ENCODE measurements at regions of chr5 and their contacts with region 1.

Region 1: GRCh38 chr5:23139338-23140171 is 286.4 kb upstream of the CDH12 start:
- DNase-seq: peak; percentile 56
- ATAC-seq: 0 out of 2 replicates have a peak, but pooled peaks have one; percentile 35
- H3K4me3 ChIP-seq: no peak overlapping the region
- H3K27ac ChIP-seq: no peak overlapping the region
- H3K4me1 ChIP-seq: no peaks in the 10 kb centered on the region
- H3K27me3 ChIP-seq: no peaks in the 10 kb centered on the region
- CTCF ChIP-seq: peak; percentile 71

Region 2: DNA sequence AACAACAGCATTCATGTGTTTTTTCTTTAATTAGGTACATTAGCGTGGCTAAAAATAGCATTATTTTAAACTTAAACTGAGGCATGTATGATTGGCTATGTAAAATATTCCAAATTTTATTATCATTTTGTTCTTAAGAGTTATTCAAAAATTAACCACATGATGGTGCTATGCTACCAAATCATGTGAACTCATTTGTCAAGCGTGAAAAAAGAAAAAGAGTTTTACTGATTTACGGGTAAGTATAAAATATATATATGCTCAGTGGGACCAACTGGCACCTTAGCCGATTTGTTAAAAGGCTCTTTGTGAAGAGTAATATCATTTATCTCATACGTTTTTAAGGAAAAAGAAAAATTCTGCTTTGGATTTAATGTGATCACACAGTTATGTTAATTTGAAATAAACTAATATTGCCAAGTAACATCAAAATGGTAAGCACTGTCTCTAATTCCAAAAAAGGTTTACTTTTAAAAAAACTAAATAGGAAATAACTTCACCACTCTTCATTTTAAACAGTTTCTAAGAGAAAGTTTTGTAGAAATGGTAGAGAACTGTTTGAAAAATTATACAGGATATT is 1328.7 kb before region 1 on chr5:
- CTCF ChIA-PET with region 1: no interaction called
- POLR2A ChIA-PET with region 1: no interaction called
- intact Hi-C with region 1: loop called (anchors 10 kb)
- DNase-seq: peak; percentile 81
- ATAC-seq: no peak
- H3K4me3 ChIP-seq: no peak overlapping the region
- H3K27ac ChIP-seq: no peak overlapping the region
- H3K4me1 ChIP-seq: peaks cover 30% of the 10 kb centered on the region
- H3K27me3 ChIP-seq: no peaks in the 10 kb centered on the region
- CTCF ChIP-seq: peak; percentile 84

Region 3: DNA sequence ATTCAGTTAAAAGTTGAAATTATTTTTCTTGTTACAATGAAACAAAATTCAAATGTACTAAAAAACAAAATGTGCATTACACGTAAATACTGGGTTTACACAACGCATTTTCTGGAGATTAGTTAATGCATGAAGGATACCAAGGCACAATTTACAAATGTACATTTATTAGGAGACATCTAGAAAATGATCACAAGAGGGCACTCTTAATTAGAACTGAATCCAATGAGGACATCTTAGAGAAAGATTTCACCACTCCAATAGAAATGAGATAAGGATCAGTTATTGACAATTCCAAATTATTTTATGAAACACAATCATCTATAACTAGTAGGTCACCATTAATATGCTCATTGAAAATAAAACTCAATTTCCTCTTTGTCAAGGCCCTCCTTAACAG is 249.8 kb before region 1 on chr5:
- CTCF ChIA-PET with region 1: no interaction called
- POLR2A ChIA-PET with region 1: no interaction called
- intact Hi-C with region 1: loop called (anchors 1 kb)
- DNase-seq: peak; percentile 36
- ATAC-seq: no peak
- H3K4me3 ChIP-seq: no peak overlapping the region
- H3K27ac ChIP-seq: no peak overlapping the region
- H3K4me1 ChIP-seq: no peaks in the 10 kb centered on the region
- H3K27me3 ChIP-seq: no peaks in the 10 kb centered on the region
- CTCF ChIP-seq: peak; percentile 61

Region 4: DNA sequence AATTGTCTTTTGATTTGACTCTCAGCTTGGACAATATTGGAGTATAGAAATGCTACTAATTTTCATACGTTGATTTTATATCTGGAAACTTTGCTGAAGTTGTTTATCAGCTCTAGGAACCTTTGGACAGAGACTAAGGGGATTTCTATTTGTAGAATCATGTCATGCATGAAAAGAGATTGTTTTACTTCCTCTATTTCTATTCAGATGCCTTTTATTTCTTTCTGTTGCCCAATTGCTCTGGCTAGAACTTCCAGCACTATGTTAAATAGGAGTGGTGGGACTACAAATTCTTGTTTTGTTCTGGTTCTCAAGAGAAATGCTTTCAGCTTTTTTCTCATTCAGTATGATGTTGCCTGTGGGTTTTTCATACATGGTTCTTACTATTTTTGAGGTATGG is 173.6 kb before region 1 on chr5:
- CTCF ChIA-PET with region 1: no interaction called
- POLR2A ChIA-PET with region 1: no interaction called
- intact Hi-C with region 1: no loop called
- DNase-seq: no peak
- ATAC-seq: no peak
- H3K4me3 ChIP-seq: no peak overlapping the region
- H3K27ac ChIP-seq: no peak overlapping the region
- H3K4me1 ChIP-seq: no peaks in the 10 kb centered on the region
- H3K27me3 ChIP-seq: no peaks in the 10 kb centered on the region
- CTCF ChIP-seq: no peak

Measured in PC-3 (cell line).